A549 (cell line): ENCODE measurements at regions of chr20 and their contacts with region 1.

Region 1: DNA sequence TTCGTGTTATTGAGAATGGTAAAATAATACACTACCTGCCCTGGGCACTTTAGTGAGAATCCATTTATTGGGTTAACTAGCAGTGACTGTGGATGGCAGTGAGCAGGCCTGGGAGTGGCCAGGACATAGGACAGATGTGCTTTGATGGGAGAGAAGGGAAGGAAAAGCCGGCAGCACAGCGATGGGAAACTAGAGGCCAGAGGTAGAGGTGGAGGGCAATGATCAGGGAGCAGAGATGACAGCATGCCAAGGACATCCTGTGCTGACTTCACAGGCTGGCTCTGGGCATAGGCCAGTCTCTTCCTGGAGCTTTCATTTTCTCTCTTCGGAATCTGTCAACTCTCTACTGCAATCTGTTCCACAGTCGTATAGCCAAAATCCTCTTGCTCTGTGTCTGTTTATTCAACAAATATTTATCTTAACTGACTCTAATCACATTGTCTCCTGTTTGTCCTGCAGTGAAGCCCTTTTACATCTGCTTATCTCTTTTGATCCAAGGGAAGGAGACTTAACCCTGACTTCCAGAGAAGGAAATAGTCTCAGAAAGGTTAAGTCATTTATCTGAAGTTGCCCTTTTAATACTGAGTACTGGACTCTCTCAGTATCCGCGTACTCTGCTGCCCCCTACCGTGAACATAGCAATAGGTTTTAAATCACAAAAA is 18.4 kb upstream of the MMP24 start:
- DNase-seq: peak; percentile 53 to 91
- ATAC-seq: peak; percentile 95 to 96
- H3K4me3 ChIP-seq: no peak overlapping the region
- H3K27ac ChIP-seq: peak overlapping the region; percentile 75 to 91
- H3K4me1 ChIP-seq: peaks cover 29% of the 10 kb centered on the region
- CTCF ChIP-seq: peak; percentile 91
- EP300 ChIP-seq: no peak; a peak in 1 of 5 replicates
- POLR2A ChIP-seq: no peak
- RAD21 ChIP-seq: peak; percentile 93 to 98

Region 2: GRCh38 chr20:34834459-34834893 is 373.6 kb before region 1 on chr20:
- CTCF ChIA-PET with region 1: interaction called, 13 read pairs
- POLR2A ChIA-PET with region 1: no interaction called
- DNase-seq: peak; percentile 36 to 46
- ATAC-seq: peak; percentile 81 to 83
- H3K4me3 ChIP-seq: peak overlapping the region; percentile 28; the same call in 1 of the 3 replicates
- H3K27ac ChIP-seq: peak overlapping the region in 1 of 2 experiments; percentile 69; a peak in 2 of 6 replicates
- H3K4me1 ChIP-seq: no peaks in the 10 kb centered on the region
- CTCF ChIP-seq: peak; percentile 67
- EP300 ChIP-seq: no peak
- POLR2A ChIP-seq: no peak
- RAD21 ChIP-seq: peak; percentile 70 to 80

Region 3: DNA sequence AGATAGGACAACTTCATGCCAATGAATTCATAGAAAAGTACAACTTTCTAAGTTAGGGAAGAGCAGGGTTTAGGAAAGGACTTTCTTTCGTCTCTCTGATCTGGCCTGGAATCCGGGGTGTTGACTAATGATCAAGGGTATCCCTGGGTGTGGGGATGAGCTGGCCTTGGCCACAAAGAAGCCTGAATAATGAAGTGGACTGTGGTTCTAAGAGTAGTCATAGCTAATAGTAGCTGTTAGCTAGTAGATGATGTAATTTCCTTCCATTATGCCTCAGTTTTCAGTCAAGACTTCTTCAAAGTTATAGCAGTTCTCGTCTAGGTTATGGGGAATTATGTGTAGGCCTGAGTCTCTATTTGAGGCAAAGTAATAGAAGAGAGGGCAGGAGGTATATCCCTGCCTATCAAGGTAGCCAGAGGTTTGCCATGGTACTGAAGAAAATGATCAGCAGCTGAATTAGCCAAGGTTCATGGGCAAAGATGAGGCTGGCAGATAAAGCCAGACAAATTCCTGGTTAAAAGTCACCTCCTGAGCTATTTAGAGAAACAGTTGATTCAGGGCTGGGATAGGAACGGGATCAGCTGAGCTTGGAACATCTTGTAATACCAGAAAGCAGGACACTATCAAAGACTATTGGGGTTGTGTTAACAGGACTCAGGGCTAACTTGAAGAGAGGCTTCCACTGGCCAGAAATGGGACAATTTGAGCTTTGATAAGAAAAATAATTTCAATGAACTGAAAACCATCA is 96.8 kb before region 1 on chr20:
- CTCF ChIA-PET with region 1: interaction called, 21 read pairs
- POLR2A ChIA-PET with region 1: no interaction called
- DNase-seq: no peak
- ATAC-seq: no peak
- H3K4me3 ChIP-seq: no peak overlapping the region
- H3K27ac ChIP-seq: peak overlapping the region in 1 of 2 experiments; percentile 47; a peak in 3 of 6 replicates
- H3K4me1 ChIP-seq: peaks cover 5% of the 10 kb centered on the region; the same call in 1 of the 3 replicates
- CTCF ChIP-seq: no peak
- EP300 ChIP-seq: no peak
- POLR2A ChIP-seq: no peak
- RAD21 ChIP-seq: no peak

Region 4: DNA sequence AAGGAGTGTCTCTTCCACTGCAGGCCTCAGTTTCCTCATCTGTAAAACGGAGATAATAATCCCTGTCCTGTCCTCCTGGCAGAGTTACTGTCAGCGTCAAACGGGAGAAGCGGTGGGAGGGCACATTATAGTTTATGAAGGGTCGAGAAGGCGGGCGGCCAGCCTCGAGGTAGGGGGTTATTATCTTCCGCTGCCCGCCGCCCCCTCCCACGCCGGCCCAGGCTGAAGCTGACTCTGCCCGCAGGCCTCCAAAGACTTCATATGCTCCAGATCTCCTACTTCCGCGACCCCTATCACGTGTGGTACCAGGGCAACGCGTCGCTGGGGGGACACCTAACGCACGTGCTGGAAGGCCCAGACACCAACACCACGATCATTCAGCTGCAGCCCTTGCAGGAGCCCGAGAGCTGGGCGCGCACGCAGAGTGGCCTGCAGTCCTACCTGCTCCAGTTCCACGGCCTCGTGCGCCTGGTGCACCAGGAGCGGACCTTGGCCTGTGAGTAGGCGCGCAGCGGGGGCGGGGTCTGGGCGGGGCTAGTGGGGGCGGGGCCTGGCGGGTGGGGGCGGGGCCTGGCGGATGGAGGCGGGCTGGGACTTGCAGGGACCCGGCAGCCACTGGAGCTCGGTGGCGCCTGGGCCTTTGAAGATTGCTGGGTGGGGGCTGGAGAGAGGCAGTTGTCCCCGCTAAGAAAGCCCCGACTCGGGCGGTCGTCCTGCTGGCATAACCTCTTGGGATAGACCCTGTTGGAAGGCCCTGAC is 33.4 kb before region 1 on chr20:
- CTCF ChIA-PET with region 1: interaction called, 16 read pairs
- POLR2A ChIA-PET with region 1: no interaction called
- DNase-seq: peak in 1 of 2 experiments; percentile 37
- ATAC-seq: no peak
- H3K4me3 ChIP-seq: no peak overlapping the region
- H3K27ac ChIP-seq: peak overlapping the region in 1 of 2 experiments; percentile 8; a peak in 1 of 6 replicates
- H3K4me1 ChIP-seq: peaks cover 30% of the 10 kb centered on the region
- CTCF ChIP-seq: no peak
- EP300 ChIP-seq: no peak
- POLR2A ChIP-seq: no peak
- RAD21 ChIP-seq: no peak

Region 5: GRCh38 chr20:35226775-35227681 is 18.9 kb after region 1 on chr20:
- CTCF ChIA-PET with region 1: interaction called, 16 read pairs
- POLR2A ChIA-PET with region 1: no interaction called
- DNase-seq: peak; percentile 49 to 50
- ATAC-seq: peak; percentile 84 to 92
- H3K4me3 ChIP-seq: peak overlapping the region; percentile 65
- H3K27ac ChIP-seq: peak overlapping the region; percentile 61 to 93; a peak in 5 of 6 replicates
- H3K4me1 ChIP-seq: peaks cover 18% of the 10 kb centered on the region; the same call in 2 of the 3 replicates
- CTCF ChIP-seq: no peak
- EP300 ChIP-seq: no peak
- POLR2A ChIP-seq: no peak
- RAD21 ChIP-seq: 0 out of 5 replicates have a peak, but pooled peaks of 1 of the 2 experiments have one; percentile 15